ENCODE measurements at regions of chr22 and their contacts with region 1.

Region 1: DNA sequence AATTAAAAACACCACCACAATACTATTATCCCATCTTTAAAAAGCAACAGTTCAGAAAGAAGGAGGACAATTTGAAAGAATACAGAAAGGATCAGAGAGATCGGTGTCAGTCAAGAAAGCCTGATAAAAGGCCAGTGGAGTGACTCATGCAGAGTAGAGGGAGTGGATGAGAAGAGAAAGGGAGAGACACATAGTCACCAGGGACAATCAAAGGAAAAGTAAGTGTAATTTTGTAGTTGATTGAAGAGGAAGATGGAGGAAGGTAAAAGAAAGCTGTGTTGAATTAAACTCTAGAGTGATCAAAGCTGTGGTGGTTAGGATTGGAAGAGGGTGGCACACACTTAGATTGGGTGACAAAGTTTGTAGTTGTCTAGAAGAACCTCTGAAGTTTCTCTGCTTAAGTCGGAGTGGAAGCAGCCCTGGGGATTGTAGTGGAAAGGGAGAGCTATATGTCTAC is 14.1 kb downstream of the SPECC1L start:
- DNase-seq: peak; percentile 42
- ATAC-seq: peak; percentile 79
- H3K4me3 Mint-ChIP-seq: peak overlapping the region; percentile 1
- H3K27ac Mint-ChIP-seq: peak overlapping the region; percentile 68
- H3K4me1 Mint-ChIP-seq: peaks cover 57% of the 10 kb centered on the region
- H3K27me3 Mint-ChIP-seq: peaks cover 2% of the 10 kb centered on the region

Region 2: DNA sequence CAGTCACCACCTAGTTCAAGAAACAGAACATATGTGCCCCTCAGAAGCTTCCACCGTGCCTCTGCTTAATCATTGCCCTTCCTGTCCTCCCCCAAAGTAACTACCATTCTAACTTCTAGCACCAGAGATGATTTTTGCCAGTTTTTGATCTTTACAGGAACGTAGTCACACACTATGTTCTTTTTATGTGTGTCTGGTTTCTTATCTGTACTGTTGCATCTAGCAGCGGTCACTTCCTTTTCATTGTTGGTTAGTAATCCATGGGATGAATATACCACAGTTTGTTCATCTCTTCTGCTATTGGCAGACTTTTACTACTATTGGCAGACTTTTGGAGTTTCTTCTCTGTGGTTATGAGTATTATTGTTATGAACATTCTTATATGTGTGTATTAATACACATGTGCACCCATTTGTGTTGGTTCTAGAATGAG is 20.5 kb after region 1 on chr22:
- CTCF ChIA-PET with region 1: interaction called, 9 read pairs
- POLR2A ChIA-PET with region 1: interaction called, 8 read pairs
- intact Hi-C with region 1: loop called (anchors 1 kb)
- DNase-seq: peak; percentile 45
- ATAC-seq: peak; percentile 88
- H3K4me3 Mint-ChIP-seq: no peak overlapping the region
- H3K27ac Mint-ChIP-seq: peak overlapping the region; percentile 7
- H3K4me1 Mint-ChIP-seq: peaks cover 50% of the 10 kb centered on the region
- H3K27me3 Mint-ChIP-seq: no peaks in the 10 kb centered on the region

Region 3: DNA sequence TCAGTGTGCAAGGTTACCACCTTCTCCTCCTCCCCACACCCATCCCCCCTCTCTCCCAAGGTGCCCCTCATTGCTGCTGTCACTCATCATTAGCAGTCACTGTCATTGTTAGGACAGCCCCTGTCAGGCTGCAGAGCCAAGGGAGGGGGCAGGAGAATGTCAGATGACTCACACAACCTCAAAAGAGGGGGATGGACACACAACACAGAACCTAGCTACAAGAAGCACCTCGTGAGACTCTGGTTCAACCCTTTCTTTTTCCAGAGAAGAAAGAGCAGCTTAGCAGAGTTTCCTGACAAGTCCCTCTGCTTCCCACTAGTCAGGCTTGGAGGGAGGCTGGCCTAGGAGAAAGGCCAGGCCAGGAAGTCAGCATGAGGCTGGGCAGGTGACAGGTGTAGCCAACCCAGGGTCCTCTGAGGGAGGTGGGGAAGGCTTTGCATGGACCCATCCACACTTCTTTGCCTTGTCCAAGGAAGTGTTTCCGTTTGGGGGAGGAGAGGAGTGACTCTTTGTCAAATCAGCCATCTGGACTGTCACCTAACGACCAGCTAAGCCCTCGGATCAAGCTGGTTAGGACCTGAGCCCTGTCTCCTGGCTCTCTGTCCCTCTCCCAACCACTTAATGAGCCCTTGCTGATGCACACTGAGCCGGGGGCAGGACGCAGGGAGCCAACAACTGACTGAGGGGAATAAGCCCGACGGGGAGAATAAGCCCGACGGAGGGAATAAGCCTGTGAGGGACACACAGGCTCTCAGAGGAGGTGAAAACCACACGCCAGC is 160.9 kb after region 1 on chr22:
- CTCF ChIA-PET with region 1: no interaction called
- POLR2A ChIA-PET with region 1: no interaction called
- intact Hi-C with region 1: no loop called
- DNase-seq: peak; percentile 63
- ATAC-seq: peak; percentile 94
- H3K4me3 Mint-ChIP-seq: no peak overlapping the region
- H3K27ac Mint-ChIP-seq: peak overlapping the region; percentile 39
- H3K4me1 Mint-ChIP-seq: peaks cover 36% of the 10 kb centered on the region
- H3K27me3 Mint-ChIP-seq: no peaks in the 10 kb centered on the region

Measured in activated CD4-positive, alpha-beta T cell treated with anti-CD3 and anti-CD28 coated beads for 36 hours (primary cell).